Spleen (tissue), 13 donors: ENCODE measurements at regions of chr2 and their contacts with region 1.

Region 1: DNA sequence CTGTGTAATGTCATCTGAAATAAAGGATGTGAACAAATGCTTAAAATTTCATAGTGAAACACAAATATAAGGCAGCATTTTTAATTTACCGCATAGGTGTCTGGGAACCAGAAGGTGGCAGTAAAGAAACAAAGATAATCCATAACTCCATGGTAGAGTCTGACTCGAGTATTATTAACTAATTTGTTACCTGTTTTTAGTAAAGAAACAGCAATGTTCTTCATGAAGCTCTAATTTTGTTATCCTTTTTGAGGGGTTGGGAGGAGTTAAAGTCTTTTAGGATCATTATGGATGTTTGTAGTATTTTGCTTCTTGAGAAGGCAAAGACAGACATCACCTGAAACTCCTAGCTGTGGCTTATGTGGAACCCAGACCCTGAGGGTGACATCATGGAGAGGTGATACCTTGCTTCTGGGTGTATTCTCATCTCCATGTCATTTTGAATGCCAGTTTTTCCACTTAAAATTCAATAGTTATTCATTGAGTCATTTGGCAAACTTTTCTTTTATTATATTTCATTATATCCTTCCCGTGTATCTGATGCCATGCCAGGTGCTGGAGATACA is 286.2 kb upstream of the EPAS1 start:
- DNase-seq: no peak
- H3K4me3 ChIP-seq: no peak overlapping the region
- H3K27ac ChIP-seq: no peak overlapping the region
- H3K4me1 ChIP-seq: peaks cover 0 to 22% (median 2%) of the 10 kb centered on the region in 6 donors
- H3K27me3 ChIP-seq: no peaks in the 10 kb centered on the region
- CTCF ChIP-seq: peak in 9 of 11 experiments; percentile 14 to 67 (median 60)
- POLR2A ChIP-seq: no peak

Region 2: GRCh38 chr2:45412754-45413379 is 598.1 kb before region 1 on chr2:
- intact Hi-C with region 1: no loop called
- DNase-seq: no peak
- H3K4me3 ChIP-seq: no peak overlapping the region
- H3K27ac ChIP-seq: peak overlapping the region in 5 of 8 donors; percentile 1 to 52 (median 44)
- H3K4me1 ChIP-seq: peaks cover 0 to 6% (median 0%) of the 10 kb centered on the region in 6 donors
- H3K27me3 ChIP-seq: no peaks in the 10 kb centered on the region
- CTCF ChIP-seq: no peak
- POLR2A ChIP-seq: no peak

Region 3: GRCh38 chr2:46458763-46459500 is 447.9 kb after region 1 on chr2:
- intact Hi-C with region 1: loop called (anchors 5 kb)
- DNase-seq: no peak
- H3K4me3 ChIP-seq: no peak overlapping the region
- H3K27ac ChIP-seq: peak overlapping the region in 2 of 8 donors; percentile 18 to 72
- H3K4me1 ChIP-seq: peaks cover 5 to 47% (median 19%) of the 10 kb centered on the region in 6 donors
- H3K27me3 ChIP-seq: no peaks in the 10 kb centered on the region
- CTCF ChIP-seq: no peak
- POLR2A ChIP-seq: no peak